ENCODE measurements at regions of chr19 and their contacts with region 1.

Region 1: GRCh38 chr19:13150187-13150930 is at the starts of genes IER2 and STX10:
- DNase-seq: peak; percentile 84

Region 2: DNA sequence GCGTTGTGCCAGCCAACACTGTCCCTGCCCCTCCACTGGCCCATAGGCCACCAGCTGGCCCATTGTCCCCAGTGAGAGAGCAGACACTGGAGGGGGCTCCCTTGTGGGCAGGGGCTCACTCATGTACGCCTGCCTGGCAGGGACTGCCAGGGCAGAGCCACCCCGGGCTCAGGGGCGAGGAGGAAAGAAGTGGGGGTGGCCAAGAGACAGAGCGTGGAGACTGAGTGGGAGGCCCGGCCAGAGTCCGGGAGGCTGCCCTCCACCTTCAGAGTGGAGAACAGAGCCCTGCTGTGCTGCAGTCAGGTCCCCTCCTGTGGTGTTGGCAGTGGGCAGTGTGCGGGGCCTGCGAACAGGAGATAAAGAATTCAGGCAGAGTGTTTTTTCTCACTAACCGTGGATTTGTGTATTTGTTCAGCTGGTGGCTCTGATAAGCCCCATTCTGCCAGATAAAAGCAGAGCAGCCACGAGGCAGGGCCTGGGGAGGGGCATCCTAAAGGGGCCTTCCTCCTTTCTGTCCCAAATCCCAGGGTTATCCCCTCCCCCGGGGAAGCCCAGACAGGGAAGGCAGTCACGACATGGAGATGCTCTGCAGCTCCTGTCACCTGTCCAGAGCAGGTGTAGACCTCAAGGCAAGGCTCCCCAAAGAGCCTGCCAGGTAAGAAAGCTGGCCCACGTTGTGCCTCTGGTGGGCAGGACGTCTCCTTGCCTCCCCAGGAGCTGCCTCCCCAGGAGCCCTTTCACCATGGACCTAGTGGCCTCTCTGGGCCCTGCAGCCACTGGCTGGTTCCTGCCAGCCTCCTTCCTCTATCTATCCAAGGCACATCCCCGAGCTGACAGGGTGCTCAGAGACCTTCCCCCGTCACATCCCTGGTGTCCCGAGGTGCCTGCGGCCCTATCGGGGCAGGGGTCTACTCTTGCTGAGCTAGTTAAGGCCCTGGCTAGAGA is 80.7 kb before region 1 on chr19:
- CTCF ChIA-PET with region 1: no interaction called
- POLR2A ChIA-PET with region 1: no interaction called
- DNase-seq: no peak

Region 3: DNA sequence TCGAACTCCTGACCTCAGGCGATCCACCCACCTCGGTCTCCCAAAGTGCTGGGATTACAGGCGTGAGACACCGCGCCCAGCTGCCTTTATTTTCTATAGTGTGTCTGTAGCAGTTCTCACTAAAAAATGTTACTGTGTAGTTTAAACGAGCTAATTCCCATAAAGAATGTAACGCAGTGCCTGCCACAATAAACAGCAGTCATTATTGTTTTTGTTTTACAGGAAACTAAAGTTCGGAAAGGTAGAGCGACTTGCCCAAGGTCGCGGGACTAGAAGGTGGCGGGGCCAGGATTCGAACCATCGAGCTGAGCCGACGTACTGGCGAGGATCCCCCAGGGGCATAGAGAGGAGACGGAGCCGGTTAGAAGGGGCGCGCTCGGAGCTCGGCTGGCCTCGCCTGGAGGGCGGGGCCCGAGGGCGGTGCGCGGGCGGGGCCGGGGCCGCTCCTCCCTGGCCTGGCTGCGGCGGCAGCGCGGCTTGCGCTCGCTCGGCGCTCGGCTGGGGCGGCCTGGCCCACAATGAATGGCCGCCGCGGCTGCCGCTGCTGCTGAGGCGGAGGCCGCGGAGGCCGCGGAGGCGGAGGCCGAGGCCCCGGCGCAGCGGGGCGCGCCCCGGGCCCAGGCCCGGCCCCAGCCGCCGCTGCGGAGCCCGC is 32.5 kb before region 1 on chr19 and contains the start of gene NACC1:
- CTCF ChIA-PET with region 1: no interaction called
- POLR2A ChIA-PET with region 1: interaction called, 25 read pairs
- DNase-seq: peak; percentile 98

Region 4: DNA sequence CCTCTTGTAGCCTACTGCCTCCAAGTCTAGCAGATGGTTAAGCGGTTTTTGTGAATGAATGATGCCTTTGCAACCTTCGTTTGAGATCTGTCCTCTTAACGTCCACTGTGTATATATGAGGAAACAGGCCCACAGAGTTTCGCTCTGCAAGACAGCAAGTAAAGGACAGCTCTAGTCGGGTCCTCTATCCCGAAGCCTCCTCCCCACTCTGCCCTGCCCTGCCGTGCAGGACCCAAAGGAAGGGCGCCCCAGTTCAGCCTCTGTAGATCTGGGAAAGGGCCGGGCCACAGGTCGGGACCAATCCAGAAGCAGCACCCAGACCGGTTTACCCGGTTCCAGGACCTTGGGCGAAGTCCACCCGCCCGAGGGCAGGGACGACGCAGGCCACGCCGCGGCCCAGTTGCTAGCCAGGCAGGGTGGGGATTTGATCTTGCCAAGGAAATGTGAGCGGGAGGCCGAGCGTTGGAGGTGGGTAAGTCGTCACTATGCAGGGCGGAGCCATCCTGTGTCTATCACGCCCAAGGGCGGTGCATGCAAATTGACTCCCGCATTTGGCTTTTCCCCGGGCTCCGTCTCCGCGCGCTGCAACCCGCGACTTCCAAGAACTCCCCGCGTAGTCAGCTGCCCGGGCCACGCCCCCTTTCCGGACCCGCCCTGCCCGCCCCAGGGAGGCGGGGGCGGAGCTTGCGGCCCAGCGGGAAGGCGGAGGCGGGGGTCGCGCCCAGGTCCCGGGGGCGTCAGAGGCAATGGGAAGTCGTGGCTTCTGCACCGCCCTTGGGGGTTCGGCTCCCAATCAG is 12.4 kb after region 1 on chr19:
- CTCF ChIA-PET with region 1: interaction called, 4 read pairs
- POLR2A ChIA-PET with region 1: interaction called, 66 read pairs
- DNase-seq: peak; percentile 91

Region 5: GRCh38 chr19:13169810-13170209 is 19.5 kb after region 1 on chr19:
- CTCF ChIA-PET with region 1: no interaction called
- POLR2A ChIA-PET with region 1: interaction called, 66 read pairs
- DNase-seq: peak; percentile 6

Region 6: GRCh38 chr19:13176345-13176744 is 26.0 kb after region 1 on chr19:
- CTCF ChIA-PET with region 1: no interaction called
- POLR2A ChIA-PET with region 1: interaction called, 13 read pairs
- DNase-seq: no peak

Region 7: DNA sequence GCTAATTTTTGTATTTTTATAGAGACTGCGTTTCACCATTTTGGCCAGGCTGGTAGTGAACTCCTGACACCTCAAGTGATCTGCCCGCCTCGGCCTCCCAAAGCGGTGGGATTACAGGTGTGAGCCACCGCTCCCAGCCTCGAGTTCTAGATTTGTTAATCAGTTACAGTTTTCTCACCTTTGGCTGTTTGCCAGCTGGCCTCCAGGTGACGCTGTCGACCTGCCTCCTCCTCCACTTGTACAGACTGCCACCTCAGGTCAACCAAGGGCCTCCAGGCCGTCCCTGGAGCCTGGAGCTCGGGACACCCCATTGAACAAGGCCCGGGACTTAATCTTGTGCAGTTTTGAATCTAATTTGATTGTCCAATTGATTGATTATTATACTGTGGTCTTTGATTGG is 45.3 kb after region 1 on chr19:
- CTCF ChIA-PET with region 1: interaction called, 3 read pairs
- POLR2A ChIA-PET with region 1: interaction called, 15 read pairs
- DNase-seq: peak; percentile 49

Measured in HEK293T (cell line).